ENCODE measurements at regions of chr9 and their contacts with region 1.

Region 1: DNA sequence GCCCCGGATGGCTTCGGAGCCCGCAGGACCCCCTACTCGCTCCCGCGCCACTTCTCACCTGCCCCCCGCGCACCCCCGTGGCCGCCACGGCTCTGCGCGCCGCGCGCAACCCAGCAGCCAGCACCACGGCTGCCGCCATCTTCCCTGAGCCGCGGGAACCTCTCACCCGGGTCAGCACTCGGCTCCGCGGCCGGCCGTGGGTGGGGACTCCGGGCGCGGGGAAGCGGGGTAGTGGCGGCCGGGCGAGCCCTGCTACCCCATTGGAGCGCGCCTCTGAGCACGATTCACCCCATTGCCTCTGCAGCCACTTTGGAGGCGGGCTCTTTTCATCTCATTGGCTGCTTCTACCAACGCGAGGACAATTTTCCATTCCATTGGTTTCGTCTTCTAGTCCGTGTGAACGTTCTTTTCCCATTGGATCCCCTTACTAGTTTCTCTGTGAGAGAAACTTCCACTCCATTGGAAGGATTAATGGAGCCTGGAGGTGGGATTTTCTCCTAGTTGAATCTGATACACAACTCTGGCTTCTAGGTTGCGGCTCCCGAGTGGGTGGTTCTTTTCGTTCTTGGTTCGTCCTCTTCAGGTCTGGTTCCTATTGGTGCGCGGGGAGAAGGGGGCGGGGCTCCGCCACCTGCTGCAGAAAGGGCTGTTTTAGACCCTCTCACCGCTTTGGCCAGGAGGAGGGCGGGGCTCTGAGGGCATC is at the start of gene HINT2:
- DNase-seq: peak; percentile 99
- H3K4me3 ChIP-seq: peak within 1 kb of the TSS; percentile 74 to 91 (median 85)
- H3K27ac ChIP-seq: peak within 1 kb of the TSS; percentile 64
- H3K4me1 ChIP-seq: peaks cover 23% of the 10 kb centered on the region
- H3K27me3 ChIP-seq: no peaks in the 10 kb centered on the region
- CTCF ChIP-seq: no peak
- total RNA-seq, gene HINT2: 11.7 to 31.9 TPM

Region 2: GRCh38 chr9:35593581-35593980 is 221.4 kb before region 1 on chr9:
- CTCF ChIA-PET with region 1: no interaction called
- dilution Hi-C with region 1: no loop called
- in situ Hi-C with region 1: no loop called
- intact Hi-C with region 1: no loop called
- DNase-seq: no peak
- H3K4me3 ChIP-seq: no peak overlapping the region
- H3K27ac ChIP-seq: no peak overlapping the region
- H3K4me1 ChIP-seq: no peaks in the 10 kb centered on the region
- H3K27me3 ChIP-seq: no peaks in the 10 kb centered on the region
- CTCF ChIP-seq: no peak

Region 3: GRCh38 chr9:35756275-35757225 is 58.4 kb before region 1 on chr9:
- CTCF ChIA-PET with region 1: no interaction called
- dilution Hi-C with region 1: loop called (anchors 5 kb)
- in situ Hi-C with region 1: no loop called
- intact Hi-C with region 1: no loop called
- DNase-seq: peak; percentile 23
- H3K4me3 ChIP-seq: peak overlapping the region; percentile 55 to 70 (median 64)
- H3K27ac ChIP-seq: no peak overlapping the region
- H3K4me1 ChIP-seq: peaks cover 24% of the 10 kb centered on the region
- H3K27me3 ChIP-seq: no peaks in the 10 kb centered on the region
- CTCF ChIP-seq: peak; percentile 48 to 77

Region 4: DNA sequence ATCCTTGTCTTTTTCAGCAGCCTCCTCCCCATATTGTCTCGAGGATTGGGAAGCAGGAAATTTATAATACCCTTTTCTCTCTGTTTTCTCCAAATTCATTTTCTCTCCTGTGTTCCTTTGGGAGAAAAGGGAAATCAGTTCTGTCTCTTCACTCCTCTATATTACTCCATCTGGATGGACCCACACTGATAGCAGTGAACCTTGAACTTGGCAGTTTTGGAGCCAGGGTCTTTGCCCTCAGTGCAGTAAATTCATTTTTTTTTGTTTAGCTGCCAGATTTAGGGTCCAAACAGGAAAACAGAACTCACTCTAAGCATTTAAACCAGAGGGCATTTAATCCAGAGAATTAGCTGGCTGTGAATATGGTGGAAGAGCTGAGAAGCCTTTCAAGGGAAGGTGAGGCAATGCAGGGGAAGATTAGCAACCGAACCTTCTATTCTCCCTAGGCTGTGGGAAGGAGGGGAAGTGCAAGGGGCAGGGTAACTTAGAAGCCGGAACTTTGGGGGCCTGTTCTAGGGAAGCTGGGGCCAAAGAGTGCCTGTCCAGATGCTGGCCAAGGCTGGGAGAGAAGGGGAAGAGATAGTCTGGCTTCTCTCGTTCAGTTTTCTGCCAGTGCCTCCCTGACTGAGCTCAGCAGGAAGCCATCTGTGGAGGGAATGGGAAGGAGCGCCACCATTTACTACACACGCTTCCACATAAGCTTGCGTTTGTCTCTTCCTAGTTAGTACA is 39.9 kb before region 1 on chr9:
- CTCF ChIA-PET with region 1: no interaction called
- dilution Hi-C with region 1: no loop called
- in situ Hi-C with region 1: no loop called
- intact Hi-C with region 1: no loop called
- DNase-seq: no peak
- H3K4me3 ChIP-seq: no peak overlapping the region
- H3K27ac ChIP-seq: no peak overlapping the region
- H3K4me1 ChIP-seq: peaks cover 14% of the 10 kb centered on the region
- H3K27me3 ChIP-seq: no peaks in the 10 kb centered on the region
- CTCF ChIP-seq: no peak

Region 5: DNA sequence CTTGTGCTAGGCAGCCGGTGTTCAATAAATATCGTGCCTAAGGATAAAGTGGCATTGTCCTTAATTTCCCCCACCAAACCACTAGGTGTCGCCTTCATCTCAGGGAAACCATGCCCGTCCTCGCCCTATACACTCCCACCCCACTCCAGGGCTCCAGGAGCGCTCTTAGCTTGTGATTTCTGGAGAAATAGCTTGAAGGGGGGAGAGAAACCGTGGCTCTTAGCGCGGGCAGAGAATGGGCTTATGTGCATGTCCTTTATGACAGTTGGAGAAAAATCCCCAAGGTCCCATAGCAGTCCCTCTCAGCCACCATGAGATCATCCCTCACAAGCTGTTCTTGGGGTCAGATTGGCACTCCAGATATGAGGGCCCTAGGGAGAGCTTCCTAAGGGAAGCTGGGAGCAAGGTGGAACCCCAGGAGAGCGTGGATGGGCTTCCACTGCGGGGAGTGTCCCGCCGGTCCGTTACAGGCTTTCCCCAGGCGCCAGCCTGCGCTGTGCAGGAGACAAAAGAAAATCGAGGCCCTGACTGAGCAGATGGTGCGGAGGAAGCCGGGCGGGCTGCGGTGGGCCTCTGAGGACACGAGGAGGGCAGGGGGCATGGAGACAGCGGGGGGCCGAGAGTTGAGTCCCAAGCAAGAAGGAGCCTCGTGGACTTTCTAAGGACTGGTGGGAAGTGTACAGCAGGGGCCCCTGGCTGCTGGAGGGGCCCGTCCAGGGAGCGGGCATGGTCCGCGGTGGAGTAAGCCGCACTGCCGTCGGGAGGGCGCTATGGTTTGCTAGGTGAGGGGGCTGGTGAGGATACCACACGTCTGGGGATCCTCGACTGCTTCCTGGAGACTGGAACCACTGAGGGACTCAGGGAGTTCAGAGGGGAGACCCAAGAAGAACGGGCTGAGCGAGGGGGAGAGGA is 24.4 kb before region 1 on chr9:
- CTCF ChIA-PET with region 1: interaction called, 4 read pairs
- dilution Hi-C with region 1: no loop called
- in situ Hi-C with region 1: no loop called
- intact Hi-C with region 1: loop called (anchors 2 kb)
- DNase-seq: peak; percentile 60
- H3K4me3 ChIP-seq: no peak overlapping the region
- H3K27ac ChIP-seq: no peak overlapping the region
- H3K4me1 ChIP-seq: peaks cover 11% of the 10 kb centered on the region
- H3K27me3 ChIP-seq: no peaks in the 10 kb centered on the region
- CTCF ChIP-seq: peak; percentile 83

Region 6: GRCh38 chr9:35798658-35799374 is 16.2 kb before region 1 on chr9:
- CTCF ChIA-PET with region 1: interaction called, 5 read pairs
- dilution Hi-C with region 1: no loop called
- in situ Hi-C with region 1: no loop called
- intact Hi-C with region 1: loop called (anchors 1 kb)
- DNase-seq: peak; percentile 95
- H3K4me3 ChIP-seq: no peak overlapping the region
- H3K27ac ChIP-seq: peak overlapping the region; percentile 31
- H3K4me1 ChIP-seq: peaks cover 23% of the 10 kb centered on the region
- H3K27me3 ChIP-seq: no peaks in the 10 kb centered on the region
- CTCF ChIP-seq: no peak

Region 7: DNA sequence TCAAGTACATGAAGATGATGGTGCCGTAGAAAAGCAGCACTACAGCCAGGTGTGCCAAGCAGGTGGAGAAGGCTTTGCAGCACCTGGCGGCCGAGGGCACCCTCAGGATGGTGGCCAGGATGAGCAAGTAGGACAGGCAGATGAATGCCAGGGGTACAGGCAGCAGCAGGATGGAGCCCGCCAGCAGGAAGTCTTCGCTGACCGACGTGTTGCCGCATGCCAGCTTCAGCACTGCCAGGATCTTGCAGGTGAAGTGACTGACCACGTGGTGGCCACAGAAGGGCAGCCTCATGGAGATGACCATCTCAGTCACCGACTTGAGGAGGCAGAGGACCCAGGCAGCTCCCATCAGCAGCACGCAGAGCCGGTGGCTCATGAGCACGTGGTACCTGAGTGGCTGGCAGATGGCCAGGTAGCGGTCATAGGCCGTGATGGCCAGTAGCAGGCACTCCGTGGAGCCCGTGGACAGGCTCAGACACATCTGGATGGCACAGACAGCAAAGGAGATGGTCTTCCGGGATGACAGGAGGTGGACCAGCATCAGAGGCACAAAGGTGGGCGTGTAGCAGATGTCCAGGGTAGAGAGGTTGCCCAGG is 54.7 kb after region 1 on chr9:
- CTCF ChIA-PET with region 1: no interaction called
- dilution Hi-C with region 1: loop called (anchors 5 kb)
- in situ Hi-C with region 1: no loop called
- intact Hi-C with region 1: no loop called
- DNase-seq: peak; percentile 59
- H3K4me3 ChIP-seq: no peak overlapping the region
- H3K27ac ChIP-seq: no peak overlapping the region
- H3K4me1 ChIP-seq: peaks cover 22% of the 10 kb centered on the region
- H3K27me3 ChIP-seq: no peaks in the 10 kb centered on the region
- CTCF ChIP-seq: peak in 1 of 2 donors; percentile 17

Region 8: GRCh38 chr9:35882263-35882848 is 67.4 kb after region 1 on chr9:
- CTCF ChIA-PET with region 1: no interaction called
- dilution Hi-C with region 1: no loop called
- in situ Hi-C with region 1: no loop called
- intact Hi-C with region 1: loop called (anchors 1 kb)
- DNase-seq: peak; percentile 46
- H3K4me3 ChIP-seq: no peak overlapping the region
- H3K27ac ChIP-seq: no peak overlapping the region
- H3K4me1 ChIP-seq: no peaks in the 10 kb centered on the region
- H3K27me3 ChIP-seq: no peaks in the 10 kb centered on the region
- CTCF ChIP-seq: peak; percentile 99

Measured in mammary epithelial cell (primary cell).